Sigmoid colon (tissue), 7 donors: ENCODE measurements at regions of chr5 and their contacts with region 1.

Region 1: GRCh38 chr5:122192497-122193496 is 63.5 kb downstream of the ZNF474 start:
- DNase-seq: no peak
- H3K4me3 ChIP-seq: no peak overlapping the region
- H3K27ac ChIP-seq: no peak overlapping the region
- H3K4me1 ChIP-seq: no peaks in the 10 kb centered on the region
- H3K27me3 ChIP-seq: no peaks in the 10 kb centered on the region
- CTCF ChIP-seq: peak; percentile 36 to 54 (median 50)
- EP300 ChIP-seq: no peak
- POLR2A ChIP-seq: no peak

Region 2: GRCh38 chr5:122300374-122300773 is 107.6 kb after region 1 on chr5:
- intact Hi-C with region 1: loop called (anchors 10 kb)
- DNase-seq: no peak
- H3K4me3 ChIP-seq: no peak overlapping the region
- H3K27ac ChIP-seq: no peak overlapping the region
- H3K4me1 ChIP-seq: peaks cover 0 to 15% (median 13%) of the 10 kb centered on the region in 4 donors
- H3K27me3 ChIP-seq: no peaks in the 10 kb centered on the region
- CTCF ChIP-seq: no peak
- EP300 ChIP-seq: no peak
- POLR2A ChIP-seq: no peak

Region 3: GRCh38 chr5:122415030-122415800 is 222.4 kb after region 1 on chr5:
- intact Hi-C with region 1: loop called (anchors 2 kb)
- DNase-seq: peak; percentile 74
- H3K4me3 ChIP-seq: no peak overlapping the region
- H3K27ac ChIP-seq: no peak overlapping the region
- H3K4me1 ChIP-seq: peaks cover 0 to 5% (median 0%) of the 10 kb centered on the region in 4 donors
- H3K27me3 ChIP-seq: no peaks in the 10 kb centered on the region
- CTCF ChIP-seq: peak; percentile 57 to 76 (median 70)
- EP300 ChIP-seq: no peak
- POLR2A ChIP-seq: no peak

Region 4: GRCh38 chr5:122500245-122501075 is 307.7 kb after region 1 on chr5:
- intact Hi-C with region 1: loop called (anchors 10 kb)
- DNase-seq: peak; percentile 70
- H3K4me3 ChIP-seq: no peak overlapping the region
- H3K27ac ChIP-seq: peak overlapping the region in 3 of 4 donors; percentile 2 to 45 (median 16)
- H3K4me1 ChIP-seq: peaks cover 0 to 13% (median 4%) of the 10 kb centered on the region in 4 donors
- H3K27me3 ChIP-seq: no peaks in the 10 kb centered on the region
- CTCF ChIP-seq: peak in 1 of 4 experiments; percentile 56
- EP300 ChIP-seq: no peak
- POLR2A ChIP-seq: no peak